Activated CD4-positive, alpha-beta T cell treated with anti-CD3 and anti-CD28 coated beads, Interleukin-2, amount 10 ng/mL, durations not matched to agents 7 days and 5 days (primary cell): ENCODE measurements at regions of chr3 and their contacts with region 1.

Region 1: GRCh38 chr3:179015551-179016020 is 56.0 kb downstream of the ZMAT3 start:
- DNase-seq: peak; percentile 87
- H3K4me3 Mint-ChIP-seq: no peak overlapping the region
- H3K27ac Mint-ChIP-seq: peak overlapping the region; percentile 14
- H3K4me1 Mint-ChIP-seq: peaks cover 49% of the 10 kb centered on the region
- H3K27me3 Mint-ChIP-seq: peaks cover 5% of the 10 kb centered on the region

Region 2: DNA sequence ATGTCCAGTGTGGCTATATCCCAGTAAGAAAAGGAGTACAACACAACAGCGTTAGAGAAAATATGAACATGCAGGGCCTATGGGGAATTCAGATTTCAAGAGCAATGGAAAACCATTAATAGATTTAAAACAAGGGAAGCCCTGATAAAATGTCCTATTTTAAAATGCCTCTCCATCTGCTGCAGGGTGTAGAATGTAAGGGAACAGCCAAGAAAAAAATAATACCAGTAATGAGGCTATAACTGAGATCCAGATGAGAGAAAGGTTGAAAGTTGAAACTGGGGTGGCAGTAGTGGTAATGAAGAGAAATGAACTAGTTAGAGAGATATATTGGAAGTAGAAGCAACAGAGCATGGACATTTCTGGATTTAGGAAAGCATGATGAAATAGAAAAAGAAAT is 253.2 kb before region 1 on chr3:
- CTCF ChIA-PET with region 1: no interaction called
- POLR2A ChIA-PET with region 1: no interaction called
- DNase-seq: no peak
- H3K4me3 Mint-ChIP-seq: no peak overlapping the region
- H3K27ac Mint-ChIP-seq: no peak overlapping the region
- H3K4me1 Mint-ChIP-seq: no peaks in the 10 kb centered on the region
- H3K27me3 Mint-ChIP-seq: no peaks in the 10 kb centered on the region

Region 3: DNA sequence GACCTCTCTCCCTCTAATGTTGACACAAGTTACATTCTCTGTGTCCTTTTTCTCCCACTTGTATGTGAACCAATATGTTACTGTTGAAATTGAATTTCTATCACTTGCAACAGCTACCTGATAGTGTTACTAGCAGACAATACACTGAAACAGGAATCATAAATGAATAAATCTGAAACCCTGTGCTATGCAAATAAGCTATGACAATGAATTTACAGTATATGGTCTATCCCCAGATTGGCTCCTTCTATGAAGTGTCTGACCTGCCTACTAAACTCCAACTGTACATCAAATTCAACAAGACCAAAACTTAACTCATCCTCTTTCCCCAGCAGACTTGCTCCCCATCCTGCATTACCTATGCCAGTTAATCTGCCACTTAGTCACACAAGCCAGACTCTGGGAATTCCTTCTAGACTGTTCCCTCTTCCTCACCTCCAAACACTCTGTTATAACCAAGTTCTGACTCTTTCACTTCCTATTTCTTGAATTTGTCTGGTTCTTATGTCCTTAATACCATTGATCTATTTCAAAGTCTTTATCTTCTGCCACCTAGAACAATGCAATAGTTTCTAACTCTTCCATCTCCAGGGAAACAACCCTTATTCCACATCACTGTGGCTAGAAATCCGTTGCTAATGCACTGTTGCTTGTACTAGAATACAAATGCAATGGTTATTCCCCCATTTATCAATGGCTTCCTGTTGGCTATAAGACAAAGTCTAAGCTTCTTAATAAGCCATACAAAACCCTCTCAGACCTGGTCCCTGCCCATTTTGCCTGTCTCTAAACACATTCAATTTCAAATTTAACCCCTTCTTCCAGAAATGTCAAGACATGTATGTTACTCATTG is 293.9 kb after region 1 on chr3:
- CTCF ChIA-PET with region 1: interaction called, 13 read pairs
- POLR2A ChIA-PET with region 1: no interaction called
- DNase-seq: no peak
- H3K4me3 Mint-ChIP-seq: no peak overlapping the region
- H3K27ac Mint-ChIP-seq: no peak overlapping the region
- H3K4me1 Mint-ChIP-seq: no peaks in the 10 kb centered on the region
- H3K27me3 Mint-ChIP-seq: peaks cover 14% of the 10 kb centered on the region

Region 4: DNA sequence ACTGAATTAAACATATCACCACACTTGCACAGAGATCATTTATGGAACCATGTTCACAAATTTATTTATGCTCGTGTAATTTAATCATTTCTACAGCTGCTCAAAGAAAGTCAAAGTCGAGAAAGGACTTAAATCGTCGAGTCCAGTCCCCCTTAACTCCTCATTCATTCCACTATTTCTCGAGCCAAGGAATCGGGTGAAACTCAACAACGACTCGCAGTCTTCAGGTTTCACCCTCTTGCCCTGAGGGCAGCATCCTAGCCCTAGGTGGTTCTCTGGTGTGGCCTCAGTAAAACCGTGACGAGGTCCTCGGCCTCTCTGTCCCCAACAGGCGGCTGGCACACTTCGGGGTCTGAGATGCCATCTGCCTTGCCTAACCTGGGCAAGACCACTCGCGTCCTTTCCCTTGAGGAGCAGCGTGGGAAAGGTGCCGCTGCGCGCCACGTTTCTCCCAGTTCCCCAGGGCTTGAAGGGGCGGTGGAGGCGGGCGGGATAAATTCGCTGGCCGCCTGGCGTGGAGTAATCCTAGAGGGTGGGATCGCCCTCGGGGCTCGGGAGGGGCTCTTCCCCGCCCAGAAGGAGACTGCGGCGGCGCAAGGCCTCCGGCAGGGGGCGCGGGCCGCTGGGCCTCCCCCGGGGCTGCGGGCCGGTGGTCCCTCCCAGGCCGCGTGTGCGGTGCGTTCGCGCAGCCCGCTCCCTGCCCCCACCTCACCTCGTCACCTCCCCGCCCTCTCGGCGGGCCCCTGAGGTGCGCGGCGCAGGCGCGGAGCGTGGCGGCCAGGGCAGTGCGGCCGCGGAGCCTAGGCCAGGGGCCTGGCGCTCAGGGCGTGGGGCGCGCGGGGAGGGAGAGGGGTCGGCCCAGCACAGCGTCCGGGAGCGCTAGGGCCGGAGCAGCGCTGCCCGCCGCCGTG is 307.0 kb after region 1 on chr3 and contains the start of gene ZNF639:
- CTCF ChIA-PET with region 1: interaction called, 21 read pairs
- POLR2A ChIA-PET with region 1: no interaction called
- DNase-seq: peak; percentile 82
- H3K4me3 Mint-ChIP-seq: peak within 1 kb of the TSS; percentile 94
- H3K27ac Mint-ChIP-seq: peak within 1 kb of the TSS; percentile 97
- H3K4me1 Mint-ChIP-seq: peaks cover 37% of the 10 kb centered on the region
- H3K27me3 Mint-ChIP-seq: peaks cover 6% of the 10 kb centered on the region
- total RNA-seq, gene ZNF639: 28.0 to 34.7 TPM